SK-N-SH (cell line): ENCODE measurements at regions of chr14 and their contacts with region 1.

Region 1: DNA sequence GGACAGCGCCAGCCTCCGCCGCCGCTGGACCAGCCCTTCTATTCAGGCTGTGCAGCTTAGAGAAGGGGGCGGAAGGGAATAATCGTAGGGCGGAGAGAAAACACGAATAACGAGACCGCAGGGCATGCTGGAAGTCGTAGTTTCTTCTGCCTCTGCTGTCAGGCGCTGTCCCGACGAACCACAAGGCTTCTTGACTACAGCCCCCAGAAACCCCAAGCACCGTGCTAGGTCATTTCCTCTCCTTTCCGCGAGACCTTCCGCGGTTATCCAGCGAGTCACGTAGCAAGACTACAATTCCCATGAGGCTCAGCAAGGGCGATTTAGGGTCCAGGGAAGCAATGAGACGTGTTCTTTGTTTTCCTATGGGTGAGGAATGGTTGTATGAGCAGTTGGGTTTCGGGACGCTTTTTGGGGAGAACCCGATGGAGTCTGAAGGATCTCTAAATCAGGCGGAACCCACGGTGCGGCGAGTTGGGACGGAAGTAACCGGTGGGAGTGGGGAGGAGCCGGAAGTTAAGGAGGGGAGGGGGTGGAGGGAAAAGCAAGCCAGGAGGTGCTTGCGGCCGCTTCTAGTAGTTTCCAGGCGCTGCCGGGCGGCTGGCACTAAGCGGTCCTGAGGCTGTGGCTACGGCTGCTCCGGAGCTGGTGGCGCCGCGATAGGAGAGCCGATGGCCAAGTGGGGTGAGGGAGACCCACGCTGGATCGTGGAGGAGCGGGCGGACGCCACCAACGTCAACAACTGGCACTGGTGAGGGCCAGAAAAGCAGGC is at the starts of genes AHSA1 and VIPAS39:
- DNase-seq: peak; percentile 91
- H3K4me3 ChIP-seq: peak within 1 kb of the TSS; percentile 96 to 99
- H3K27ac ChIP-seq: peak within 1 kb of the TSS; percentile 92 to 96
- H3K4me1 ChIP-seq: peaks cover 12% of the 10 kb centered on the region in 2 experiments; a peak in 3 of 4 replicates
- H3K27me3 ChIP-seq: no peaks in the 10 kb centered on the region
- CTCF ChIP-seq: no peak
- EP300 ChIP-seq: peak in 1 of 2 experiments; percentile 59; a peak in 1 of 4 replicates
- RAD21 ChIP-seq: no peak
- polyA plus RNA-seq, gene AHSA1: 366 and 439 TPM in 2 replicates
- polyA plus RNA-seq, gene VIPAS39: 20.8 and 29.2 TPM in 2 replicates

Region 2: DNA sequence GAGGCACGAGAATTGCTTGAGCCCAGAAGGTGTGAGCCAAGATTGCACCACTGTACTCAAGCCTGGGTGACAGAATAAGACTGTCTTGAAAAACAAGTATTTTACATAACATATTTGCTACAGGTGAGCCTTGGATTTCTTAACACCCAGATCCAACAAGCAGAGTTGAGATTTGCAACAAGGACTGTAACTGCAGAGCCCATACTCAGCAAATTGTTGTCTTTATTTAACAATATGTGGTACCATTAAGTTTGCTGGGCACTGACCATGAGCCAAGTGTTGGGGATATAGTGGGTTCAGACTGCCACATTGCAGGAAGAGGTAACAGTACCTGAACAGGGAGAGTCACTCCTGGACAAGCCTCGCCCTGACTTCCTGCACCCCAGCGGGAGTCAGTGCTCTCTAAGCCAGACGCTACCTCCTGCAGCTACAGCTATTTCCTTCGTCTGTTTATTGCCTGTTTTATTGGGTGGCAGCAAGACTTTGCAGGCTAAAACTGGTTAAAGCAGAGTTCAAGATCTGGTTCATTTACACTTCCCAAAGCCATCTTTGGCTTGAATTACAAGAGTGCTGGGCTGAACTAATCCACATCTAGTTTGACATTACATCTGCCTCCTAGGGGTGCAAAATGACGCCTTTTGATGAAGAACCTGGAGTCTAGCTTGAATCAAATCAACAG is 12.6 kb after region 1 on chr14:
- CTCF ChIA-PET with region 1: interaction called, 15 read pairs
- POLR2A ChIA-PET with region 1: no interaction called
- DNase-seq: no peak
- H3K4me3 ChIP-seq: no peak overlapping the region
- H3K27ac ChIP-seq: no peak overlapping the region
- H3K4me1 ChIP-seq: no peaks in the 10 kb centered on the region
- H3K27me3 ChIP-seq: no peaks in the 10 kb centered on the region
- CTCF ChIP-seq: no peak
- EP300 ChIP-seq: no peak
- RAD21 ChIP-seq: no peak

Region 3: DNA sequence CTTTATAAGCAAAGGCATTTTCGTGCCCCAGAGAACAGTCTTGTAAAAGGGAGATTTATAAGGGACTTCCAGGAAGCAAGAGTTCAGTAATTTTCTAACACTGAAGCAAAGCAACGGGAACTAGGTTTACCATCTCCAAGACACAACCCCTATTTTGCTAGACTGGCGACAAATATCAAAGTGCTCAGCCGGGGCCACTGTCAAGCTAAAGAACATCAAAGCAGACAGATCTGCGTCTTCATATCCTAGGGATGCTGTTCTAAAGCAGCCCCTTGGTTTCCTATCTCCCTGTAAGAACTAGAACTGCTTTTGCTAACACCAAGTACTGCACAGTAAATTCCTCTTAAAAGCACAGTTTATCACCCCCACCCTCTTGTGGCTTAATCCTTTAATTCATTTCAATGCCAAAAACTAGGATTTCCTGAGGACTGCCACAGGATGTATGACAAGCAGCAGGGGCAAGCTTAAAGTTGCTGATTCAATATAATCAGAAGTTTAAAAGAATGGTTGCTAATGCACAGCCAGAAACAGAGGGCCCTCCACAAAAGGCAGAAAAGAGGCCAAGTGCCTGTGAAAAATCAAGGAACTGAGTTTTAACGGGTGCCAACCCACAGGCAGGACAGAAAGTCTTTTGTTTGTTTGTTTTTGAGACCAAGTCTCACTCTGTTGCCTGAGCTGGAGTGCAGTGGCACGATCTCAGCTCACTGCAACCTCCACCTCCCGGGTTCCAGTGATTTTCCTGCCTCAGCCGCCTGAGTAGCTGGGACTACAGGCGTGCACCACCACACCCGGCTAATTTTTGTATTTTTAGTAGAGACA is 84.9 kb after region 1 on chr14:
- CTCF ChIA-PET with region 1: interaction called, 13 read pairs
- POLR2A ChIA-PET with region 1: no interaction called
- DNase-seq: no peak
- H3K4me3 ChIP-seq: no peak overlapping the region
- H3K27ac ChIP-seq: no peak overlapping the region
- H3K4me1 ChIP-seq: 0 out of 4 replicates have a peak, but pooled peaks cover 0 to 7% of the 10 kb centered on the region in 2 experiments
- H3K27me3 ChIP-seq: no peaks in the 10 kb centered on the region
- CTCF ChIP-seq: no peak
- EP300 ChIP-seq: no peak
- RAD21 ChIP-seq: no peak

Region 4: DNA sequence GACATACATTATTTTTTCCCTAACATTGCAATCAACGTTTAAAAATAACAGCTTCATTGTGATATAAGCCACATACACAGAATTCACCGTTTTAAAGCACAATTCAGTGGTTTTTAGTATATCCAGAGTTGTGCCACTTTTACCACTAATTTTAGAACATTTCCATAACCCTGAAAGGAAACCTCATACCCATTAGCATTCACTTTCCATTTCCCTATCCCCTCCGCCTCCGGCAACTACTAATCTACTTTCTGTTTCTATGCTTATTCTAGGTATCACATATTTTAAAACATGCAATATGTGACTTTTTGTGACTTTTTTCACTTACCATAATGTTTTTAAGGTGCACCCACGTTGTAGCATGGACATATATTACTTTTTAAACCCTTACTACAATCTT is 96.5 kb after region 1 on chr14:
- CTCF ChIA-PET with region 1: interaction called, 40 read pairs
- POLR2A ChIA-PET with region 1: interaction called, 3 read pairs
- DNase-seq: no peak
- H3K4me3 ChIP-seq: no peak overlapping the region
- H3K27ac ChIP-seq: no peak overlapping the region
- H3K4me1 ChIP-seq: no peaks in the 10 kb centered on the region
- H3K27me3 ChIP-seq: no peaks in the 10 kb centered on the region
- CTCF ChIP-seq: no peak
- EP300 ChIP-seq: no peak
- RAD21 ChIP-seq: no peak